ENCODE measurements at regions of chrX and their contacts with region 1.

Region 1: GRCh38 chrX:13223868-13224555 is 95.8 kb downstream of the ATXN3L start:
- H3K4me3 ChIP-seq: no peak overlapping the region
- H3K27ac ChIP-seq: peak overlapping the region; percentile 63
- H3K4me1 ChIP-seq: peaks cover 34% of the 10 kb centered on the region
- CTCF ChIP-seq: no peak

Region 2: DNA sequence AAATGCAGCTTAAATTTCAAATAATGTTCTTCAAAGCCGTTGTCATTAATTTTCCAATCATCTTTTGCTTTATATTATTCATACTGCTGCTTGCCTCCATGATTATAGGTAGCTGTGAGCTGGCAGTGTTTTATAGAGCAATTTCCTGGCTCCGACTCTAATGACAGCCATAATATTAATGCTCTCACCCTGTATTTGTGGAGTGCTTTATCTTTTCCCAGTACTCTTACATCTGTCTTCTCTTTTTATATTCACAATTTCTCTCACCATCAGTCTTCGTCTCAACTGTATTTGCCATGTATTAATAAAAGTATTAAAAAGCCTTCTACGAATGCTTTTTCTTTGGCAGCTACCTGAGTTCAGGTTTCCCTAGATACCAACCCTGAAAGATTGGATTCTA is 74.8 kb after region 1 on chrX:
- CTCF ChIA-PET with region 1: interaction called, 4 read pairs
- POLR2A ChIA-PET with region 1: interaction called, 16 read pairs
- H3K4me3 ChIP-seq: no peak overlapping the region
- H3K27ac ChIP-seq: peak overlapping the region; percentile 50
- H3K4me1 ChIP-seq: peaks cover 25% of the 10 kb centered on the region
- CTCF ChIP-seq: no peak